T-cell (primary cell): ENCODE measurements at regions of chr7 and their contacts with region 1.

Region 1: DNA sequence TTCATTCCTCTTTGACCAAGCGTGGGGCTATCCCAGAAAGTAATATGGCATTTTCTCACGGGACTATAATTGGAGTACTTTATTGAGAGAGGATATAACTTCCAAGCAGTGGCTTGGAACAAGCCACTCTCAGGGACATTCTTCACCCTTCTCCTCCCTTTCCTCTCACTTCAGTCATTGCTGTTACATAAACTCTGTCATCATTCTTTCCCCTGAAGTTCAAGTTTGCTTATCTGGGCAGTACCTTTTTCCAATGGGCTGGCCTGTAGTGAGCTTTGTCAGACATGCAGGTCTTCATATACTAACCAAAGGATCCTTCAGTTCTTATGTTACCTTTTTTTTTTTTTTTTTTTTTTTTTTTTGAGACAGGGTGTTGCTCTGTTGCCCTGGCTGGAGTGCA is 58.7 kb upstream of the KMT2E start:
- DNase-seq: no peak
- ATAC-seq: no peak
- H3K4me3 ChIP-seq: no peak overlapping the region
- H3K4me3 Mint-ChIP-seq: no peak overlapping the region
- H3K27ac ChIP-seq: no peak overlapping the region
- H3K27ac Mint-ChIP-seq: no peak overlapping the region
- H3K4me1 ChIP-seq: peaks cover 4 to 15% of the 10 kb centered on the region in 2 experiments
- H3K4me1 Mint-ChIP-seq: peaks cover 19 to 33% (median 24%) of the 10 kb centered on the region in 3 donors
- H3K27me3 ChIP-seq: no peaks in the 10 kb centered on the region
- H3K27me3 Mint-ChIP-seq: no peaks in the 10 kb centered on the region

Region 2: DNA sequence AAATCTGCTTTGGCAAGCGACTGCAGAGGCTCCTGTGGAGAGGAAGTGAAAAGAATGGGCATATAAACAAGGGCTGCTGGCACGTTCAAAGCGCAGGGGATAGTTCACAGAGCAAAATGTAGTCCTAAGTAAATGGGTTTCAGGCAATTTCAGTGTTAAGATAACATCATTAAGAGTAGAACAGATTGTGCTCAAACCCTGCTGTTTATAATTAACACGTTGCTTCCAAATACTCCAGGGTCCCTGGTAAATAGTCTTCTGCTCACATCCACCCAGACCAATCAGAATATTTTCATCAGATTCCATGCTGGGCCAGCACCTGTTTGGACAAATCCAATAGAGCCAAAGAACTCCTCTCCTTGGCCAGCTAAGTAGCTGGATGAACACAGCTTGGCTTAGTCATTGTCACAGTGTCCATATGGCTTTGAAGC is 828.9 kb before region 1 on chr7:
- CTCF ChIA-PET with region 1: no interaction called
- POLR2A ChIA-PET with region 1: no interaction called
- DNase-seq: no peak
- ATAC-seq: no peak
- H3K4me3 ChIP-seq: no peak overlapping the region
- H3K4me3 Mint-ChIP-seq: no peak overlapping the region
- H3K27ac ChIP-seq: no peak overlapping the region
- H3K27ac Mint-ChIP-seq: no peak overlapping the region
- H3K4me1 ChIP-seq: no peaks in the 10 kb centered on the region
- H3K4me1 Mint-ChIP-seq: no peaks in the 10 kb centered on the region
- H3K27me3 ChIP-seq: no peaks in the 10 kb centered on the region
- H3K27me3 Mint-ChIP-seq: no peaks in the 10 kb centered on the region

Region 3: GRCh38 chr7:105156731-105157130 is 201.5 kb after region 1 on chr7:
- CTCF ChIA-PET with region 1: no interaction called
- POLR2A ChIA-PET with region 1: interaction called in 1 of 2 experiments, 12 read pairs
- DNase-seq: no peak
- ATAC-seq: no peak
- H3K4me3 ChIP-seq: no peak overlapping the region
- H3K4me3 Mint-ChIP-seq: no peak overlapping the region
- H3K27ac ChIP-seq: no peak overlapping the region
- H3K27ac Mint-ChIP-seq: peak overlapping the region in 1 of 2 donors; percentile 5
- H3K4me1 ChIP-seq: no peaks in the 10 kb centered on the region
- H3K4me1 Mint-ChIP-seq: peaks cover 6 to 14% (median 9%) of the 10 kb centered on the region in 3 donors
- H3K27me3 ChIP-seq: no peaks in the 10 kb centered on the region
- H3K27me3 Mint-ChIP-seq: no peaks in the 10 kb centered on the region